Adrenal gland (tissue), 19 donors: ENCODE measurements at regions of chr12 and their contacts with region 1.

Region 1: DNA sequence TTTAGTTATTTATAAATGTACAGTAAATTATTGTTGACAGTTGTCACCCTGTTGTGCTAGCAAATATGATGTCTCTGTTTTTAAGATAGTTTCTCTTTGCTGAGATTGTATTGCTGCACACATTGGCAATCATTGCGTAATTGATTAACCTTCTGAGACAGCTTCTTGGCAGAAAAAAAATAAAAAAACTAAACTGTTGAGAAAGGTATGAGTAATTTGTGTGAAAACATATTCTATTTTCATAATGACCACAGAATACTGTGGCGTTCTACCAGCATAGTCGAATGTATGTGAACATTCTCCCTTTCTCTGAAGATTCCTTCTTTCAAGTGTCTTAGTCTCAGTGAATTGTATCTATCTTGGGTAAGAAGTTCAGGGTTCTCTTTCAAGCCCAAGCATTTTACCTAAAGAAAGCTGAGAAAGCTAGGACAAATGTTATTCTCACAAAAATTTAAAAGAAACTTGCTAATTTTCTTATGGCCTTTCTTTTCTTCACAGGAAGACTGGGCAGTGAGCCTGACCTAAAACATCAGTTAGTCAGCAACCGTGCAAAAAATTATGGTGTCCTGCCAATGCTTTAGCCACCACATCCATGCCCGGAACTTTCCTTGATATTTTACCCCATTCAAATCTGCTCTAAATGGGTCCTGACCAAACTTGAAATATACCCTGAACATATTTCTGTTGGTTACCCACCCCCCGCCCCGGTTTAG is 69.0 kb upstream of the REP15 start:
- DNase-seq: peak in 5 of 7 donors; percentile 32 to 64 (median 47)
- H3K4me3 ChIP-seq: no peak overlapping the region
- H3K27ac ChIP-seq: peak overlapping the region; percentile 37 to 80 (median 64)
- H3K4me1 ChIP-seq: peaks cover 17 to 30% of the 10 kb centered on the region in 2 donors
- H3K27me3 ChIP-seq: no peaks in the 10 kb centered on the region
- CTCF ChIP-seq: peak in 2 of 6 experiments; percentile 16 to 26
- POLR2A ChIP-seq: peak in 1 of 2 donors; percentile 23

Region 2: DNA sequence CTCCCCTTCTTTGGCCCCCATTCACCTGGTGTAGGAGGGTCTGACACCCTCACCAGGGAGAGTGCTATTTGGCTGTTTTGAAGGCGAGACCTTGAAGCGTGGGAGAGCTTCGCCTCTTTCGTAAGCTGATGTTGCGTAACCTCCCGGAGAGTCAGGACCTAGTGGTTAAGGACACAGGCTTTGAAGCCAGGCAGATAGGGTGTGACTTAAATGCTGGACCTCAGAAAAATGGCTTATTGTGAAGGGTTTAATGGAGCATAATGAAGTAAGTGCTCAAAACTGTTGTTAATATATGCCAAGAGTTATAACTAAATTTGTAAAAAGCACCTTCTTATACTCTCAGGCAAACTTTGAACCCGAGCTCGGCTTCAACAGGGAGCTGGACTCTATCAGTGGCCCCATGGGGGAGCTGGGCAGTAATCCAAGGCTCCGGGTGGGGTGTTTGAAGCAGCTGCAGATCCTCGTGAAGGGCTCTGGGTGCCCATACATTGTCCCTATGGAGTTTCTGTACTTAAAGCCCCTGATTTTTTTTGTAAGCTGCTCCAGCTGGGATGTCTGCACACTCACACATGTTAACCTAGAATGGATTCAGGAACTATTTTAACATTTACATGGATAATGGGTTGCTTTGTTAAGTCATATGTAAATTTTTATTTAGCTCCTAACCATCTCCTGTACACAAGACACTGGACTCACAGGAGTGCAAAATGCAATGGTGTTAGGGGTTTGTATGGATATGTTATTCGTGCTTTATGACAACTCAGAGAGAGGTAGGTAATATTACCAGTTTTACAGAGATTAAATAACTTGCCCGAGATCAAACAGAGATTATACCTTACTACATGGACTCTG is 77.3 kb before region 1 on chr12:
- intact Hi-C with region 1: loop called in 1 of 2 experiments (anchors 10 kb)
- DNase-seq: peak; percentile 90 to 97 (median 95)
- H3K4me3 ChIP-seq: peak overlapping the region in 1 of 4 donors; percentile 25
- H3K27ac ChIP-seq: peak overlapping the region; percentile 52 to 89 (median 75)
- H3K4me1 ChIP-seq: peaks cover 47 to 68% of the 10 kb centered on the region in 2 donors
- H3K27me3 ChIP-seq: no peaks in the 10 kb centered on the region
- CTCF ChIP-seq: no peak
- POLR2A ChIP-seq: peak in 1 of 2 donors; percentile 37